Dorsolateral prefrontal cortex (tissue), 120 donors: ENCODE measurements at regions of chr13 and their contacts with region 1.

Region 1: GRCh38 chr13:49443704-49444523 is at the starts of genes CAB39L and SETDB2:
- DNase-seq: peak; percentile 96 to 99 (median 99)
- H3K4me3 ChIP-seq: peak within 1 kb of the TSS; percentile 45 to 96 (median 84)
- H3K27ac ChIP-seq: peak within 1 kb of the TSS; percentile 63 to 97 (median 92)
- H3K27me3 ChIP-seq: no peaks in the 10 kb centered on the region
- CTCF ChIP-seq: peak in 55 of 56 donors; percentile 10 to 80 (median 62)
- total RNA-seq, gene CAB39L: 27.2 to 86.9 (median 50.7) TPM
- total RNA-seq, gene SETDB2: 12.4 to 25.4 (median 18.7) TPM

Region 2: DNA sequence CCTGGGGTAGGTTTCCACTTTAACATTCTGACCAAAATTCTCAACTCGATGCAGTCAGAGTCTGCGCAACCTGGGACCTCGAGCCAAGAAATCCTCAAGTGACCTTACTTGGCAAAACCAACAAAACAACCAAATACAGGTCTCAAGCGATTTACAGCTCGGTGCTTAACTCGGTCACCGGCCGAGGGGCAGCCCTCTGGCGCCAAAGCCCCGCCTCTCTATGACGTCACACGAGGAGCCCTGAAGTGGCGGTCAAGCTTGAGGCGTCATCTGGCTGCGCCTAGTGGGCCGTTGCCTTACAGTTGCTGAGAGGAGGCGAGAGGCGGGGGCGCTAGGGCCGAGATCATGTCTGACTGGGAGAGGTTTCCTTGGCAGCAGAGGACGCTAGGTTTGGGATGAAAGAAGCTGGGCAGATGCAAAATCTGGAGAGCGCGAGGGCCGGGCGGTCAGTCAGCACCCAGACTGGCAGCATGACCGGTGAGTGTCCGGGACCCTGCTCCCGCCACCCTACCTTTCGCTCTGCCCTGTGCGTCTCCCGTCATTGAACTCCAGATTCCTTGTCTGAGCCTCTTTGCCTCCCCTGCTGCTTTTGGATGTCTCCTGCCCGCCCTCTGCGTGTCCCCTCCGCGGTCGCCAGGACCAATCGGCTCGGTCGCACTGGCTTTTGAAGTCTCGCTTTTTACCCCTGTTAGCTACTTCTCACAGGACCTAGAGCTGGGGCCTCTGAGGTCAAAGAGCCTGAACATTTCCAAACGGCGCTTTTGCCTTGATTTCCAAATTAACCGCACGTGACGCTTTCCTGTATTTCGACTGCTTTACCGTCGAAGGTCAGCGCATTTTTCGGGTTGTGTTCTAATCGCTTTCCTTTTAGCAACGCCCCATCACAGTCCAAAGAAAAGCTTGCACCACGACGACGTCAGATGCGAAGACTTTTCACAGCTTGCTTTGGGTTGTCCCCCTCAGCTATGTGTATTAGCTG is 196.0 kb before region 1 on chr13 and contains the start of gene CDADC1:
- intact Hi-C with region 1: loop called in 1 of 2 experiments (anchors 5 kb)
- DNase-seq: peak; percentile 92 to 99 (median 97)
- H3K4me3 ChIP-seq: peak within 1 kb of the TSS; percentile 65 to 99 (median 91)
- H3K27ac ChIP-seq: peak within 1 kb of the TSS; percentile 26 to 96 (median 84)
- H3K27me3 ChIP-seq: no peaks in the 10 kb centered on the region
- CTCF ChIP-seq: peak in 36 of 56 donors; percentile 7 to 53 (median 32)
- total RNA-seq, gene CDADC1: 10.8 to 28.5 (median 17.3) TPM

Region 3: DNA sequence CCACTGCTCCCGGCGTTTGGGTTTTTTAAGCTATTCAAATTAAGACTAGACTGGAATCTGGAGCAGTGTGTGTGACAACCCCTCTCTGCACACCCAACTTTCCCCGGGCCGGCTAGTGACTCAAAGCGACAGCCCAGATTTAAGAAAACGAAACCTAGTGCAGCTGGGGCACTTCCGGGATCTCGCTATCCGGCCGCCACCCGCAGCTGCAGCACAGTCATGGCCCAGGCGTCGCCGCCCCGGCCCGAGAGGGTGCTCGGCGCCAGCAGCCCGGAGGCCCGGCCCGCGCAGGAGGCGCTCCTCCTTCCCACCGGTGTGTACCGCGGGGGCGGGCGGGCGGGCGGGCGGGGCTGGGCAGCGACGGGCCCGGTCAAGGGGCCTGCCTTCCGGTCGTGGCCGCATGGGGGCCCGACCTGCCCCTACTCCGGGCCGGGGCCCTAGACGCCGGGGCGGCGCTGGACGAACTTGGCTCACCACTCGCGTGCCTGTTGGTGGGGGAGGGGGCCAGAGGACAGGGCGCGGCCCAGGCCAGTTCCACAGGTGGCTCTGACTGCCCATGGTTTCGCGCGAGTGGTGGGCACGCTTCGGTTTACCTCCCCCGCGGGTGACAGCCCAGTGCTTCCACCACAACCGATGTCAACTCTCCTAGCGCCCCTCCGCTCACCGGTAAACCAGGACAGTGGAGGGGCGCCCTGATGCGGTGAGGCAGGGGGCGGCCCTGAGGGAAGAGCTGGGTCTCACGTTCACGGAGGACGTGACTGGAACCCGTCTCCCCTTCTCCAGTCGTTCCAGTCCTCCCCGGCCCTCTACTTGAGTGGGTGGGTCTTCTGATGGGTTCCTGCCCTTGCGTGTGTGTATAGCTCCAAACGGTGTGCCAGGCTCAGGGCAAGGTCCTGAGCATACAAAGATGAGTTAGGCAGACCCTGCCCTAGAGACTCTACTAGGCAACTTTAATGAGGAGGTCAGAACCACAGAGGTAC is 52.2 kb after region 1 on chr13 and contains the start of gene PHF11:
- intact Hi-C with region 1: loop called (anchors 1 to 5 kb)
- DNase-seq: peak; percentile 34 to 78 (median 64)
- H3K4me3 ChIP-seq: peak within 1 kb of the TSS; percentile 58 to 88 (median 75)
- H3K27ac ChIP-seq: peak within 1 kb of the TSS; percentile 58 to 96 (median 92)
- H3K27me3 ChIP-seq: no peaks in the 10 kb centered on the region
- CTCF ChIP-seq: peak in 19 of 56 donors; percentile 4 to 42 (median 26)
- total RNA-seq, gene PHF11: 20.4 to 55.8 (median 32.2) TPM

Region 4: GRCh38 chr13:49585220-49586157 is 141.6 kb after region 1 on chr13 and contains the start of gene RCBTB1:
- intact Hi-C with region 1: loop called (anchors 2 kb)
- DNase-seq: peak; percentile 43 to 73 (median 57)
- H3K4me3 ChIP-seq: peak within 1 kb of the TSS; percentile 66 to 100 (median 95)
- H3K27ac ChIP-seq: peak within 1 kb of the TSS; percentile 68 to 98 (median 91)
- H3K27me3 ChIP-seq: no peaks in the 10 kb centered on the region
- CTCF ChIP-seq: peak in 19 of 56 donors; percentile 5 to 42 (median 25)
- total RNA-seq, gene RCBTB1: 22.3 to 65.9 (median 35.9) TPM

Region 5: GRCh38 chr13:49606747-49607648 is 163.1 kb after region 1 on chr13:
- intact Hi-C with region 1: loop called (anchors 2 to 5 kb)
- DNase-seq: peak; percentile 79 to 96 (median 91)
- H3K4me3 ChIP-seq: peak overlapping the region in 58 of 59 donors; percentile 15 to 66 (median 48)
- H3K27ac ChIP-seq: peak overlapping the region in 29 of 59 donors; percentile 4 to 80 (median 46)
- H3K27me3 ChIP-seq: no peaks in the 10 kb centered on the region
- CTCF ChIP-seq: peak; percentile 65 to 96 (median 86)

Region 6: GRCh38 chr13:49792550-49793324 is 348.8 kb after region 1 on chr13 and contains the start of gene KPNA3:
- intact Hi-C with region 1: loop called in 1 of 2 experiments (anchors 5 kb)
- DNase-seq: peak; percentile 90 to 98 (median 96)
- H3K4me3 ChIP-seq: peak within 1 kb of the TSS; percentile 70 to 99 (median 86)
- H3K27ac ChIP-seq: peak within 1 kb of the TSS; percentile 80 to 98 (median 95)
- H3K27me3 ChIP-seq: no peaks in the 10 kb centered on the region
- CTCF ChIP-seq: peak in 49 of 56 donors; percentile 15 to 64 (median 41)
- total RNA-seq, gene KPNA3: 25.3 to 46.1 (median 35.7) TPM